Activated naive CD4-positive, alpha-beta T cell treated with anti-CD3 and anti-CD28 coated beads, Interleukin-2, amount 10 ng/mL, durations not matched to agents 7 days and 5 days (primary cell): ENCODE measurements at regions of chr10 and their contacts with region 1.

Region 1: DNA sequence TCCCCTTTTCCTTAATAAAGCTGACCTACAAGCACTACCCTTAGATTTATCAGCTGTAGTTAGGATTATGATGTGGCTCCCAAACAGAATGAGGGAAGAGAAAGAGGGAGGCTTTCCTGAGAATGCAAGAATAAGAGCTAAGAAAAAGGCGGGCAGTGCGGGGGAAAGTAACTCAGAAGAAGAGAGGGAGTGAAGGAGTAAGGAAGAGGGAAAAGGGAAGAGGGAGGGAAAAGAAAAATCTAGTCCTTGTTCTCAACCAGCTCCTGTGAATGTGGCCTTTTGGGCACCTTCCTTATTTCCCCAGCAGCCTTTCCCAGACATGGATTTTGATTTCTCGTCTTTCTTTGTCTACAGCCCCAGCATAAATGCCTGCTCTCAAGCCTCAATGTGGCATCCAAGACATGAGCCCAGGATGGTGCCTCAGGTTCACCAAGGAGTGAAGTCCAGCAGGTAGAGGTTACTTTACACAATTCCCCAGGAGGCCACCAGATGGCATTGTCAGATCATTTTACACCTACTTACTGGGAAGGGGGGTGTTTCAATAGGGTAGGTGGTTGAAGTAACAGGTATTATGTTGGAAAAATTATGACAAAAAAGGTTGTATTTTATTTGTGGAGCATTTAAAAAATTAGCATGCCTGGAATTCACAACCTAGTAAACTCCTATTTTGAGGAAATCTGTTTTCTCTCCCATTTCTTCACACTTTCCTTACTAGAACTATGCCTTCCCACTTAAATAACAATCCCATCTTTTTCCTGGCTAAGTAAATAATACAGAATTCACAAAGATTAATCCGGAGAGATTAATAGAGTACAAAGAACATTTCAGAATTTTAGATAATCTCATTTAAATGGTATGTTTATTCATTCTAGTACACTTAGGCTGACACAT is 106.5 kb downstream of the HTR7 start:
- DNase-seq: peak; percentile 55
- H3K4me3 Mint-ChIP-seq: no peak overlapping the region
- H3K27ac Mint-ChIP-seq: no peak overlapping the region
- H3K4me1 Mint-ChIP-seq: no peaks in the 10 kb centered on the region
- H3K27me3 Mint-ChIP-seq: peaks cover 23% of the 10 kb centered on the region

Region 2: GRCh38 chr10:90862908-90863514 is 111.7 kb after region 1 on chr10:
- CTCF ChIA-PET with region 1: interaction called, 34 read pairs
- DNase-seq: no peak
- H3K4me3 Mint-ChIP-seq: no peak overlapping the region
- H3K27ac Mint-ChIP-seq: no peak overlapping the region
- H3K4me1 Mint-ChIP-seq: peaks cover 4% of the 10 kb centered on the region
- H3K27me3 Mint-ChIP-seq: peaks cover 66% of the 10 kb centered on the region

Region 3: DNA sequence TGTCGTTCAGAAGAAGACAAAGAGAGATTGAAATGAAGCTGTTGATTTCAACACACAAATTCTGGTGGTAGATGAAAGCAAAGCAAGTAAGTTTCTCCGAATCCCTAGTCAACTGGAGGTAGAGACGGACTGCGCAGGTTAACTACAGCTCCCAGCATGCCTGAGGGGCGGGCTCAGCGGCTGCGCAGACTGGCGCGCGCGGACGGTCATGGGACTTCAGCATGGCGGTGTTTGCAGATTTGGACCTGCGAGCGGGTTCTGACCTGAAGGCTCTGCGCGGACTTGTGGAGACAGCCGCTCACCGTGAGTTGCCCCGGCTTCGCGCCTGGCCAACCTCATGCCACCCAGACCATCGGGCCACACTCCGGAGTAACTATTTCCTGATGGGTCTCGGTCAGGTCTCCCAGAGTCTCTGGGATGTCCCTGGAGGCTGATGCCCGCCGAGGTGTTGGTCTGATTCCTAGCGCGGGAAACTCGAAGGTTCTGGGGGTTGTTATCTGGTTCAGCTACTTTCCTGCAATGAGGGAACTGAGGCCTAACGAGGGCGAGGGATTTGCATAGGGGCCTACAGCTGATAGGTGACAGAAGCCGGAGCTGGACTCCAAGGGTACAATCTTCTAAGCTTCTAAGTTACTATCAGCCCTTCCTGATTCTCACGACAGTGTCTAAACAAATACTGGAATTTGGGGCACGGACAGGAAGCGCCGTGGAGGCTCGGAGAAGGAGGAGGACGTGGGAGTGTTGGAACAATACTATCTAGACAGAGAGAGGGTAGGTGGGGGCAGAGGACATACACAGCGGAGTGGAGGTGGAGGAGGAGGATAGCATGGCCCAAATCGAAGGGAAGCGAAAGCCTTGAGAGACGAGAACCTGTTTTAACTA is 120.7 kb after region 1 on chr10 and contains the start of gene RPP30:
- CTCF ChIA-PET with region 1: interaction called, 16 read pairs
- DNase-seq: peak; percentile 88
- H3K4me3 Mint-ChIP-seq: peak within 1 kb of the TSS; percentile 94
- H3K27ac Mint-ChIP-seq: peak within 1 kb of the TSS; percentile 85
- H3K4me1 Mint-ChIP-seq: peaks cover 41% of the 10 kb centered on the region
- H3K27me3 Mint-ChIP-seq: peaks cover 17% of the 10 kb centered on the region